GM18951 (cell line): ENCODE measurements at regions of chr16 and their contacts with region 1.

Region 1: DNA sequence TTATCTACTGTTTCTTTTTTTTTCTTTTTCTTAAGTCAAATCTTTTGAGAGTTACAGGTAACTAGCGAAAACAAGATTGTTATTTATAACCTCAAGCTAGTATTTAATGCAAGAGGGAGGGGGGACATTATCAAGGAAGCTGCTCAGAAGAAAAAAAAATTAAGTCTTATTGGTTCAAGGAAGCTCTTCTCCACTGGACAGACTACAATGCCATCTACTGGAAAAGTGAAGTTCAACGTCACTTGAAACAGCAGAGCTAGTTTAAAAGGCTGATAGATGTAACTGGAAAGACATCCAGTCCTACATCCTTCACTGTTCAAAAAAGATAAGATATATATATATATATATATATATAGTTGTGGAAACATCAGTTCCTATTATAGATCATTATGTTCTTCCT is 418.0 kb upstream of the PSMD7 start:
- POLR2A ChIP-seq: no peak

Region 2: DNA sequence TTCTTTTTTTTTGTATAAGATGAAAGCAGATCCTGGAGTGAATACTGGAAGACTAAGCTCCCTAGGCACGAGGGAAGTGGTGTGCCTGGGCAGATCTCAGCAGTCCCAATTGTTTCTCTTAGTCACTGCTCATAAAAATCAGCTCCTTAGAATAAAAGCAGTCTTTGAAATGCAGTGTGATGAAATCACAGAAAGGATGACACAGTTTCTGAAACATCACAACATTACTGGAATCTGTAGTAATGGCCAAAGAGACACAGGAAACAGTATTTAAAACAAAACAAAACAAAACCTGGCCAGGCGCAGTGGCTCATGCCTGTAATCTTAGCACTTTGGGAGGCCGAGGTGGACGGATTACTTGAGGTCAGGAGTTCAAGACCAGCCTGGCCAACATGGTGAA is 796.0 kb before region 1 on chr16:
- in situ Hi-C with region 1: loop called (anchors 25 kb)
- POLR2A ChIP-seq: no peak

Region 3: DNA sequence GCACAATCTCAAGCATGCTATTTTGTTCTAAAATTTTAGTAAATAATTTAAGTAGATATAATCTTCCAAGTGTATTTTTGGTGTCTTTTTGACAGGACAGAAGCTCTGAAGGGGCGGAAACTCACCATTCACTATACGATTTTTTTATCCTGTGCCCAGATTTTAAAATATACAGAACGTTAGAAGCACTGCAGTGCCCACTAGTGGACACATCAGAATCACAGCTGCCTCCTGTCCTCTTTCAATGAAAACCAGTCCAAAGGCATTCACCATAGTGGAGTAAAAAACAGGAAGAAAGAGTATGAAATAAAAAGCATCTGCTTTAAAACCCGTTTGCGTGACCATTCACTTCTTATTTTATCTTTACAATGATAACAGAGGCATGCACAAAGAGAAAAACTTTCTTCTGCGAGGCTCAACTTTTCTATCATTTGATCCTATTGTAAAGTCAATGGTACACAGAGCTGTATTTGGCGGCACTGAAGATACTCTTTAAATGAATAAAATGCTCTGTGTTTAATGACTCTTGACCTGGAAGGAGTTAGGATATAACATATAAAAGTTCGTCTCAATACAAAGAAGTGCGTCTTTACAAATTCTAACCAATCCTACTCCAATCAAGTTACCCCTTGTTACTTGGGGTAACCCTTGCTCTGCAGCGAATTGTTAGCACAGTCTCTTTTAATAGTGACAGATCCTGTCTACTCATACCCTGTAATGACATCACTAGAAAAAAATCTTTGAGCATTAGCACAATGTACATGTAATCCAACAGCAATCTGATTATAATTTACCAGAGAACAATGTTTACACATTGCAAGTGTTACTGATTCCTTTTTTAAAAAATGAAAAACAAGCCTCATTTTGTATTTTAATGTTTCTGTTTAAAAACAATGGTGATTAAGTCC is 78.2 kb after region 1 on chr16:
- in situ Hi-C with region 1: no loop called
- POLR2A ChIP-seq: no peak